Aorta (tissue), 5 donors: ENCODE measurements at regions of chr9 and their contacts with region 1.

Region 1: DNA sequence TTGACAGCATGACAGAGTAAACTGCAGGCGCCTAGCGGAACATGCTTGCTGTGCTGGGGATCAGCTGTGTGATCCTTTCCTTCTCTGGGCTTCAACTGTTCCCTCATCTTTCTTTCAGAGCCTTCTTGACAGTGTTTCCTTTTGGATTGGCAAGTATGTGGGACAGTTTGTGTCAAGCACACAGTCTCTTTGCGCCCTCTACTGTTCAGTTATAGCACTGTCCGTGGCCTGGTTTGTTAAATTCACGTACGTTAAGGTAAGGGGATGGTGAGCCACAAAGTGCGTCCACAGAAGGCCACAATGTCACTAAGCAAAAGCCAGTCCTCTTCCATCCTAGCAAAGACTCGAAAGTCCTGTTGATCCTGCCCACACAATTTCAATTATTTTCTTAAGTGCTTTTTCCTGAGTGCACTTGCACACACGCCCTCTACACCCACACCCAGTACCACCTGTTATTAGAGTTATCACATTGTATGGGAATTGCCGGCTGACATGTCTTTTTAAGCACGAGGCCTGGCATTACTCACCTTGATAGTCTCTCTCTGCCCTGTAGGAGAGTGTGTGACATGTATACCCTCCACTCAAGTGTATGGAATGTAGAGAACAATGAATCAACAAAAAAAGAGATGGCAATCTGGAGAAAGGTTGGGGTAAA is 22.5 kb upstream of the PTPN3 start:
- DNase-seq: peak; percentile 56 to 75
- ATAC-seq: peak; percentile 89
- H3K4me3 ChIP-seq: no peak overlapping the region
- H3K27ac ChIP-seq: no peak overlapping the region
- H3K4me1 ChIP-seq: no peaks in the 10 kb centered on the region
- H3K27me3 ChIP-seq: no peaks in the 10 kb centered on the region

Region 2: DNA sequence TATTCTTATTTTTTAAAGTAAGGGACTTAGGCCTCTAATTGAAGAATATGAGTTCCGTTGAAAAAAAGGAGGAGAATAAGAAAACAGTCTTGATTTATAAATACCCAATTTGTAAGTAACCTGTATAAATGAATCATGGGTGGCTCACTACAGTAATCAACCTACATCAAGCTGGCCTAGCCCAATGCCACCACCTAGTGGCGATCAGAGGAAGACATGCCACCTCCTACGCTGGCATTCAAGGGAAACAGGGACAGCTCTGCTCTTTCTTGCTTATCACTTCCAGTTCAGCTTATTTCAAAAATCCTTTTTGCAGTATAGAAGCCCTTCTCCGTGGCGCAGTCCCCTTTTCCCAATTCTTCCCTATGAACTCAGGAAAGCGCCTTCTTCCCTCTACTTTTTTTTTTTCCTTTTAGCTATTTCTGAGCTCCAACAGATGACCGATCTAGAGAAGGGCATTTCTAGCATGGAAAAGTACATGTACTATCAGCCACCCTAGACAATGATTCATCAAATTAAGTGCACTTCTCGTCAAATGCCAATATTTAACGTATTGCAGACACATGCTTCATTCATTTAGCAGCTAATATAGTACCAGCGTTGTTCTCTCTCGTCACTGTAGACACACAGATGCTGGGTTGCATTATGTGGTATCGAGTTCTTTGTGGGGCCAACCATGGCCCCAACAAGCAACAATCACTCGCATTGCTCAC is 50.8 kb before region 1 on chr9:
- intact Hi-C with region 1: loop called (anchors 1 to 2 kb)
- DNase-seq: peak; percentile 76 to 83
- ATAC-seq: peak; percentile 83
- H3K4me3 ChIP-seq: no peak overlapping the region
- H3K27ac ChIP-seq: peak overlapping the region in 1 of 2 donors; percentile 25
- H3K4me1 ChIP-seq: peaks cover 3 to 4% of the 10 kb centered on the region in 2 donors
- H3K27me3 ChIP-seq: no peaks in the 10 kb centered on the region